Activated B cell treated with CpG ODN at 0.5 μM for 24 hours (primary cell): ENCODE measurements at regions of chrX and their contacts with region 1.

Region 1: DNA sequence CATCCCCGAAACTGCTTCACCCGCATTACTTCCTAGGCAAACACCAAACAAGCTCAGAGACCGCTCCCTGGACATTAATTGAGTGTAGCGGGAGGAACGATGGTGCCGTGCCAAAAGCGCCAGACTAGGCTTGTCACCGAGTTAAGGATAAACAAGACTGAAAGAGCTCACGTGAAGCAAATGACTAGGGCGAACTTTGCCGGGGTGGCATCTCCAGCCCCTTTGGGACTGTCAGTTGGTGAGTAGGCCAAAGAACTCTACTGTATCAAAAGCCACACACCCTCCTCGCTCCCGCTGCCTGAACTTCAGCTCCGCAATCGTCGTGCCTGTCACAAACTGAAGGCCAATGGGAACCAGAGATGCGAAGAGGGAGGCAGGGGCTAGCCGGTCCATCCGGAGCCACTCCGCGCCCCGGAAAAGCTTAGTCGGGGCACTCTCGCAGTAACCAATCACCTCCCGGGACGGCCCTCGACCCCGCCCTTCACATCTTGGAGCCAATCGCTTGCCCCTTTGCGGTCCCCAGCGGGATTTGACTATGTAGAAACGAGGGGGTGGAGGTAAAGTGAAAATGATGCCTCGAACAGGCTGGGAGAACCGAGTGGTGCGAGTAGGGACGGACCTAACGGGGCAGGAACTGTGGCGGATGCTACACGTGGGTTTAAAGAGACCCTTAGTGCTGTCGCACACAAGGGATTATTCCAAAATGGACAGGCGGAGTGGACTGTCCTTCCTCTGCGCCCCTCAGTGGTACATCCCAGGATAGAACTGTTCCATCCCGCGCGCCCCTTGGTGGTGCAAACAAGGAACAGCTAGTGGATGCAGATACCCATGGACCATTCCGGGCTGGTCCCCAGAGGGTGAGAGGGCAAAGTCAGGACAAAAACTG is 37.1 kb upstream of the FAM156A start:
- DNase-seq: peak; percentile 74
- ATAC-seq: peak; percentile 97
- H3K4me3 Mint-ChIP-seq: peak overlapping the region; percentile 97
- H3K27ac Mint-ChIP-seq: peak overlapping the region; percentile 99
- H3K4me1 Mint-ChIP-seq: peaks cover 16% of the 10 kb centered on the region
- H3K27me3 Mint-ChIP-seq: no peaks in the 10 kb centered on the region
- CTCF ChIP-seq: no peak

Region 2: DNA sequence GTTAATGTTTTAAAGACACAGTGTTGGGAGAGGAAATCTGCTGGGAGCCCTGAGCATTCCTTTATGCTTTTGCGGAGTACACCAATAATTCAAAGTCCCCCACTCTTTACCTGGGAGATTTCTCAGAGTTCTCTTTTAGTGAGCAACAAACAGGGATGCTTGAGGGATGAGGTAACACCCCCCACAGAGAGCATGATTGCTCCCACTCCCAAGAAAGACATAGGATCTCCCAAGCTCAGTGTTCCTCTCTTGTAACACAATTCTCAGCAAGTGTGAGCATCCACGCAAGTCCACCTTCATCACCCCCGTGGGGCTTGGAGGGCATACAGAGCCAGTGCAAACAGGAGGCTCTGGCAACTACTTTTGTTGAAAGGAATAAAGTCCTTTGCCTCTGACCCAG is 1216.1 kb before region 1 on chrX:
- CTCF ChIA-PET with region 1: no interaction called
- POLR2A ChIA-PET with region 1: no interaction called
- intact Hi-C with region 1: no loop called
- DNase-seq: no peak
- ATAC-seq: no peak
- H3K4me3 Mint-ChIP-seq: no peak overlapping the region
- H3K27ac Mint-ChIP-seq: no peak overlapping the region
- H3K4me1 Mint-ChIP-seq: no peaks in the 10 kb centered on the region
- H3K27me3 Mint-ChIP-seq: peaks cover 5% of the 10 kb centered on the region
- CTCF ChIP-seq: no peak

Region 3: DNA sequence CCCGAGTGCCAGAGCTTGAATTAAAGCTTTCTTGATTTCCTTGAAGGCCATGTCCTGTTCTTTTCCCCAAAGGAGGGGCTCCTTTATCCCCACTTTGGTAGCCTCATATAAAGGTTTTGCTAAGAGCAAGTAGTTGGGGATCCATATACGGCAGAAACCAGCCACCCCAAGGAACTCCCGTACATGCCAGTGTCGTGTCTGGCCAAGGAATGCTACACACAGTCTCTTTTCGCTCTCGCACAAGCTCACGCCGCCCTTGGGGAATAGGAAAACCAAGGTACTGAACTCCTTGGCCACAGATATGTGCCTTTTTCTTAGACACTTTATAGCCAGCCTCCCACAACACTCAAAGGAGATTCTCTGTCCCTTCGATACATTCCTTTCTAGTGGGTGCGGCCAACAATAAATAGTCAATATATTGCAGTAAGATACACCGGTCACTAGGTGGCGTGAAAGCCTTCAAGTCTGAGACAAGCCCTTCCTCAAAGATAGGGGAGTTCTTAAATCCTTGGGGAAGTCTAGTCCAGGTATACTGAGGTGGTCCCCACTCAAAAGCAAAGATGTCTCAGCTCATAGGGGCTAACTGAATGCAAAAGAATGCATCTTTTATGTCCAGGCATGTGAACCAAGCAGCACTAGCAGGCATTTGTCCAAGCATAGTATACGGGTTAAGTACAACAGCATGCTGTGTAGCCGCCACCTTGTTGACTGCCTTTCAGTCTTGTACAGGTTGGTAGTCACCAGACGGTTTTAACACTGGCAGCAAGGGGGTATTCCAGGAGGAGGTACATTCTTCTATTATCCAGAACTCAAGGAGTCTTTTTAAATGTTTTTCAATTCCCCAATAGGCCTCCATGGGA is 420.7 kb before region 1 on chrX:
- CTCF ChIA-PET with region 1: no interaction called
- POLR2A ChIA-PET with region 1: no interaction called
- intact Hi-C with region 1: loop called (anchors 2 kb)
- DNase-seq: no peak
- ATAC-seq: peak; percentile 42
- H3K4me3 Mint-ChIP-seq: no peak overlapping the region
- H3K27ac Mint-ChIP-seq: no peak overlapping the region
- H3K4me1 Mint-ChIP-seq: no peaks in the 10 kb centered on the region
- H3K27me3 Mint-ChIP-seq: peaks cover 4% of the 10 kb centered on the region
- CTCF ChIP-seq: no peak

Region 4: DNA sequence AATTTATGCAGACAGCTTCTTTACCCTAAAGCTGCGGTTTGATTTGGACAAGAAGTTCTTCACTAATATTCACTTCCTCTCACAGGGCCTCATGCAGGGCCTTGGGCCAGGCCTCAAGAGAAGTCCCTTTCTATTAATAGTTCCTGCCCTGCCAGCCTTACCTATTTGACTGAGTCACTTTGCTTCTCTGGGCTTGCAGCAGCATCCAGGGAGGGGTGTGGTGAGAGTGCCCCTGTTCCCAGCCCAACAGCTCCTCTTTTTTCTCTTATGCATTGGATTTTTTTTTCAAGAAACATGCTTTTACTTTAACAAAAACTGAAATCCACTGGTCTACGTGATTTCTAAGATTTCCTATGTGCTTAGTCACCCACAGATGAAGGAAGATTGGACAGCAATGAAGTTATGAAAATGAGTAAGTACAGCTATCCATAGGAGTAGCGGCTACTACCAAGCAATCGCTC is 71.6 kb before region 1 on chrX:
- CTCF ChIA-PET with region 1: interaction called, 4 read pairs
- POLR2A ChIA-PET with region 1: interaction called, 12 read pairs
- intact Hi-C with region 1: no loop called
- DNase-seq: no peak
- ATAC-seq: peak; percentile 25
- H3K4me3 Mint-ChIP-seq: peak overlapping the region; percentile 58
- H3K27ac Mint-ChIP-seq: peak overlapping the region; percentile 78
- H3K4me1 Mint-ChIP-seq: peaks cover 34% of the 10 kb centered on the region
- H3K27me3 Mint-ChIP-seq: no peaks in the 10 kb centered on the region
- CTCF ChIP-seq: no peak

Region 5: DNA sequence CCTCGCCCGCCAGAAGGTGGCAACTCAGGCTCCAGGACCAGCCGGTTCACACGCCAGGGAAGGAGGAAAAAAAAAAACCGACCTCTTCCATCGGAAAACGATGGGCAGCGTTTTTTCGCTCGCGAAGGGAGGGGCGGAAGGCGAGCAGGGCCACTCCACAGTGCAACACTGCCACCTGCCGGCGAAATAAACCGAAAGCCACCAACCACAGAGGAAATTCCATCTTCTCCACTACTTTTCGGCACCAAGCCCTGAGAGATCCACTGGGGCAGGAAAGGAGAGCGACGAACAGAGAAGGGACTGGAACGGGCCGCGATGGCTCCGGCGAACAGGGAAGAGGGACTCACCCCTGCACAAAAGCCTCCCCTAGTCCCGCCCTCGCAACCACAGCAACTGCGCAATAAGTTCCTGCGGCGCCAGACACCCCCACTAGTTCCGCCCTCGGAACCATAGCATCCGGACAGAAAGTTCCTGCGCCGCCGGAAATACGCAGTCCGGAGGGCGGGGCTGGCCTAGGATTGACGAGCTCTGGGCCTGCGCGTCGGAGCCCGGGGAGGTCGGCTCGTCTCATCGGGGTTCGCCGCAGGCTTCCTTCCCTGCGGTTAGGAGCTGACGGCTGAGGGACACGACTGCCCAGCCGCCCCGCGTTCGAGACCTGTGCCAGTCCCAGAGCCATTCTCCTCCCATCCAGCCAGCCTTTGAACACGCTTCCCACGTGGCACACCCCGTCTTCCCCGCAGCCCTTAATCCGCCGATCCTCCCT is 60.5 kb before region 1 on chrX:
- CTCF ChIA-PET with region 1: no interaction called
- POLR2A ChIA-PET with region 1: interaction called, 10 read pairs
- intact Hi-C with region 1: no loop called
- DNase-seq: peak; percentile 82
- ATAC-seq: peak; percentile 92
- H3K4me3 Mint-ChIP-seq: peak overlapping the region; percentile 97
- H3K27ac Mint-ChIP-seq: peak overlapping the region; percentile 99
- H3K4me1 Mint-ChIP-seq: peaks cover 15% of the 10 kb centered on the region
- H3K27me3 Mint-ChIP-seq: no peaks in the 10 kb centered on the region
- CTCF ChIP-seq: no peak

Region 6: DNA sequence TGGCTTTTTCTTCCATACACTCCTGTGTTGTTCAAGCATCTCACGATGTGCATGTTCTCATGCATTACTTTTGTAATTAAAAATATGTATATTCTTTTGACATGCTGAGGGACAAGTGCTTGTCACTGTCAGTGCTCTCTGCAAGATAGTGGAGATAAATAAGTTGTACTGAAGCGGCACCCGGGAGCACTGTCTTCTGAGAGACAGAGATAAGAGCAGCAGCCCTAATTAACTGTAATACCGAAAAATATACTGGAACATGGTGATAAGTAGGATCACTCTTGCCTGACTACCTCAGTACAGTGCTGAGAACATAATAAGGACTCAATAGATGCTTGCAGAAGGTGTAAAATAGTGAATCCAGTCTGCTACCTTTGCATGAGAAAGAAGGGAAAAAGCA is 43.9 kb after region 1 on chrX:
- CTCF ChIA-PET with region 1: no interaction called
- POLR2A ChIA-PET with region 1: no interaction called
- intact Hi-C with region 1: no loop called
- DNase-seq: no peak
- ATAC-seq: no peak
- H3K4me3 Mint-ChIP-seq: no peak overlapping the region
- H3K27ac Mint-ChIP-seq: no peak overlapping the region
- H3K4me1 Mint-ChIP-seq: no peaks in the 10 kb centered on the region
- H3K27me3 Mint-ChIP-seq: peaks cover 6% of the 10 kb centered on the region
- CTCF ChIP-seq: no peak

Region 7: GRCh38 chrX:53056292-53056691 is 60.9 kb after region 1 on chrX:
- CTCF ChIA-PET with region 1: no interaction called
- POLR2A ChIA-PET with region 1: no interaction called
- intact Hi-C with region 1: no loop called
- DNase-seq: no peak
- ATAC-seq: no peak
- H3K4me3 Mint-ChIP-seq: no peak overlapping the region
- H3K27ac Mint-ChIP-seq: no peak overlapping the region
- H3K4me1 Mint-ChIP-seq: no peaks in the 10 kb centered on the region
- H3K27me3 Mint-ChIP-seq: no peaks in the 10 kb centered on the region
- CTCF ChIP-seq: no peak

Region 8: DNA sequence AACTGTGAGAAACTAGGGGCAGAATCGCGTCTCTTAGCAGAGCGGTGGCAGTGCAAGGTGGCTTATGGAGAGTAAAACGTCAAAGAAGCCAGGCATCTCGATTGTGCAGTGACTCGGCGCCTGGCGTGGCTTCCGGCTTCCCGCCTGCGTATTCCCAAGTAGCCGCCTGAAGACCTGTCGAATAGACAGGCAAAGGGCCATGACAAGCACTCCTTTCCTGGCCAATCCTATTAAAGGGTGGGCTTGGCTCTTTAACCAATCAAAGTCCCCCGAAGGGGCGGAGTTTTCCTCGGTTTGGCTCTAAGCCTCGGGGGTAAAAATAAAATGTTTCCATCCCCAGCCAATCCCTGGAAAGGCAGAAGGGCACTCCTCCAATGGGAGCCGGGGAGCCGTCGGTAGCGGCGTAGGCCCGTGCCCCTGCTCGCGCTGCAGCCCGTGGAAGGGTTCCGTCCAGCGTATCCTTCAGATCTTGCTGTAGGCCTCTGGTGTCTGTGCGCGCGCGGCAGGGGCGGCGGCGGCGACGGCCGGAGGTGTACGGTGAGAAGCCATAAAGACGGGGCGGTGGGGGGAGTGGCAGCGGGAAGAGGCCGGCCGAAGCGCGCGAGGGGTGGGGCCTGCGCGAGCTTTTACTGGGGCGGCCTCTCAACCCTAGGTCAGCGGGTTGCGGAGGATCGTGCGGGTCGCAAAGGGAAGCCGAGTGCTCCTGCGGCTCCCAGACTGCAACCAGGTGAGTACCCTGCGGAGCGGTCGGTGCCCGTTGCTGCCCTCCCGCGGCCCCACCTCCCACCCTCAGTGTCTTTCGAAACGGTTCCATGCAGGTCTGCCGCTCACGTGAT is 98.6 kb after region 1 on chrX and contains the start of gene KANTR:
- CTCF ChIA-PET with region 1: no interaction called
- POLR2A ChIA-PET with region 1: interaction called, 3 read pairs
- intact Hi-C with region 1: loop called (anchors 1 kb)
- DNase-seq: peak; percentile 67
- ATAC-seq: peak; percentile 79
- H3K4me3 Mint-ChIP-seq: peak within 1 kb of the TSS; percentile 88
- H3K27ac Mint-ChIP-seq: peak within 1 kb of the TSS; percentile 85
- H3K4me1 Mint-ChIP-seq: peaks cover 20% of the 10 kb centered on the region
- H3K27me3 Mint-ChIP-seq: no peaks in the 10 kb centered on the region
- CTCF ChIP-seq: no peak
- total RNA-seq, gene KANTR: 11.2 and 12.0 TPM in 2 replicates

Region 9: GRCh38 chrX:53224860-53225797 is 229.8 kb after region 1 on chrX and contains the start of gene KDM5C:
- CTCF ChIA-PET with region 1: no interaction called
- POLR2A ChIA-PET with region 1: interaction called, 4 read pairs
- intact Hi-C with region 1: loop called (anchors 1 kb)
- DNase-seq: peak; percentile 69
- ATAC-seq: peak; percentile 91
- H3K4me3 Mint-ChIP-seq: peak within 1 kb of the TSS; percentile 98
- H3K27ac Mint-ChIP-seq: peak within 1 kb of the TSS; percentile 98
- H3K4me1 Mint-ChIP-seq: peaks cover 33% of the 10 kb centered on the region
- H3K27me3 Mint-ChIP-seq: no peaks in the 10 kb centered on the region
- CTCF ChIP-seq: no peak
- total RNA-seq, gene KDM5C: 109 and 117 TPM in 2 replicates

Region 10: GRCh38 chrX:53511322-53511721 is 515.9 kb after region 1 on chrX:
- CTCF ChIA-PET with region 1: no interaction called
- POLR2A ChIA-PET with region 1: no interaction called
- intact Hi-C with region 1: no loop called
- DNase-seq: no peak
- ATAC-seq: no peak
- H3K4me3 Mint-ChIP-seq: no peak overlapping the region
- H3K27ac Mint-ChIP-seq: no peak overlapping the region
- H3K4me1 Mint-ChIP-seq: no peaks in the 10 kb centered on the region
- H3K27me3 Mint-ChIP-seq: no peaks in the 10 kb centered on the region
- CTCF ChIP-seq: no peak